ENCODE measurements at regions of chr3 and their contacts with region 1.

Region 1: GRCh38 chr3:179967622-179968021 is 69.1 kb downstream of the PEX5L start:
- DNase-seq: no peak
- ATAC-seq: no peak
- H3K4me3 ChIP-seq: no peak overlapping the region
- H3K4me3 Mint-ChIP-seq: no peak overlapping the region
- H3K27ac ChIP-seq: no peak overlapping the region
- H3K27ac Mint-ChIP-seq: no peak overlapping the region
- H3K4me1 ChIP-seq: no peaks in the 10 kb centered on the region
- H3K4me1 Mint-ChIP-seq: no peaks in the 10 kb centered on the region
- H3K27me3 ChIP-seq: no peaks in the 10 kb centered on the region
- H3K27me3 Mint-ChIP-seq: peaks cover 21% of the 10 kb centered on the region
- CTCF ChIP-seq: no peak

Region 2: GRCh38 chr3:178907081-178907480 is 1060.5 kb before region 1 on chr3:
- CTCF ChIA-PET with region 1: no interaction called
- POLR2A ChIA-PET with region 1: no interaction called
- intact Hi-C with region 1: loop called in 1 of 2 experiments (anchors 5 kb)
- DNase-seq: no peak
- ATAC-seq: no peak
- H3K4me3 ChIP-seq: no peak overlapping the region
- H3K4me3 Mint-ChIP-seq: no peak overlapping the region
- H3K27ac ChIP-seq: no peak overlapping the region
- H3K27ac Mint-ChIP-seq: no peak overlapping the region
- H3K4me1 ChIP-seq: no peaks in the 10 kb centered on the region
- H3K4me1 Mint-ChIP-seq: no peaks in the 10 kb centered on the region
- H3K27me3 ChIP-seq: no peaks in the 10 kb centered on the region
- H3K27me3 Mint-ChIP-seq: no peaks in the 10 kb centered on the region
- CTCF ChIP-seq: no peak